ENCODE measurements at regions of chr19 and their contacts with region 1.

Region 1: DNA sequence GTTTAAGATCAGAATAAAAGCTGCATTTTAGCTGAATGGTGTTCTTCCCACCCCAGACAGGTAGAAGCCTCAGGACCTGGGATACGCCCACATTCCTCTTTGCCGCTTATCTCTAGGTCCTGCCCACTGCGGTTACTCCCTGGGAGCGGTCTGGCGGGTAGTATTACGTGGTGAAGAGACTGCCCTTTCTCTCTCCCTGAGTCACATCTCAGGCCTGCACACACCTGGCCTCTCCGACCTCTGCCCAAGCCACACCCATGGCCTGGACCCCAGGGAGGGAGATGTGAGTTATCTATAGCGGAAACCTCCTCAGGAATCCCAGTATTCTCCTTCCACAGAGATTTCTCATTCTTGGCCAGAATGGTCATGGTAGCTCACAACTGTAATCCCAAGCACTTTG is 17.3 kb downstream of the RHPN2 start:
- DNase-seq: peak; percentile 98
- H3K4me3 Mint-ChIP-seq: peak overlapping the region; percentile 47
- H3K27ac Mint-ChIP-seq: peak overlapping the region; percentile 81
- H3K4me1 Mint-ChIP-seq: peaks cover 80% of the 10 kb centered on the region
- H3K27me3 Mint-ChIP-seq: no peaks in the 10 kb centered on the region
- CTCF ChIP-seq: no peak

Region 2: DNA sequence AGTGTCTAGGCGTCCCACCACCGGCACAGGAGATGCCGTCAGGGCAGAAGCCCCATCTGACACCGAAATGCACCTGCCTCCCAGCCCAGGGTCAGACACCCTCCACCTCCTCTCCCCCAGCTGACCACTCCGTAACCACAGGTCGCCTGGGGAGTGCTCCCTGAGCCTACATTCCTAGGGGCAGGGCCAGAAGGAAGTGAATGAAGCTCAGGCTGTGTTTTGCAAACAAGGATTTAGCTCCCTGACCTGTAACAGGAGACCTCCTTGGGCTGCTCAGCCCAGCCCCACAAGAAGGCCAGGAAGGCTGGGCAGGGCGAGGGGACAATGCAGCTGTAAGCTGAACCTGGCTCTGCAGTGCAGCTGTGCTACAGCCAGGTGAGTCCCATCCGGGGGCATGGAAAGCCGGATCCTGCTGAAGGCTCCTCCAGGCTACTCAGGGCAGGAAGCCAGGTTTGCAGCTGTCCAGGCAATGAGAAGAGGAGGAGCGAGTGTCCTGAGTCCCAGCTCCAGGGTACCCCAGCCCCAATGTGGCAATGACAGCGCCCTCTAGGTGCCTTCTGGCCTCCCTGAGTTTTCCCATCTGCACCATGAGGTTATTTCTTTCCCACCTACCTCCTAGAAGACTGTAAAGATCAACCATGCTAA is 24.8 kb before region 1 on chr19:
- CTCF ChIA-PET with region 1: no interaction called
- intact Hi-C with region 1: no loop called
- DNase-seq: no peak
- H3K4me3 Mint-ChIP-seq: no peak overlapping the region
- H3K27ac Mint-ChIP-seq: no peak overlapping the region
- H3K4me1 Mint-ChIP-seq: peaks cover 12% of the 10 kb centered on the region
- H3K27me3 Mint-ChIP-seq: no peaks in the 10 kb centered on the region
- CTCF ChIP-seq: no peak

Region 3: DNA sequence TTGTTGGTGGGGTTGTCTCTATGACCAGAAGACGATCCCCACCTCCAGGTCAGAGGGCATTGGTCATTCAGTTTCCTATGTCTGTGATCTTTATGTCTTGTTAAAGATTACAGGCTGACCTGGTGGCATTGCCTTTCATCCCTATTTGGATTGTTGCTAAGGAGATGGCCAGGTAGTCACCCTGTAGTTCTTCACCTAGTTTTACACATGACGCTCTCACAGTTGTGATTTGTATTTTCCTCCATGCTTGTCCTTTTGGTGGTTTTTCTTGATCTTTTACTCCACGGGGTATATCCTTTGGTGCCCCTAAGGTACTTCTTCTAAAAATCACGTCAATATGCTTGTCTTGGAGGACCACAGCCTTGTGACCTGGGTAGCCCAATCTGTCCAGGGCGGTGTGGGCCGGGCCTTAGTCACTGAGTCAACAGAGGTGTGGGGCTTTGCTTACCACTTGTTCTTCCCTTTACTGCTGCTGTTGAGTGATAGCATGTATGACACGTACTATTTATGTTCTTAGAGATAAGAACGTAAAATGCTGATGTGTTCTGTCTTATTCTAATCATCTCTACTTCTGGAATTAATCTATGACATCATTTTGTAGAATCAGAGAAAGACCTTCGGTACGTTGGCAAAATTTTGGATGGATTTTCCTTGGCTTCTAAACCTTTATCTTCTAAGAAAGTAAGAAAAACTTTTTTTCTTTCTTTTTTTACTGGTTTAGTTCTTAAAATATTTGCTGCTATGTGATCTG is 53.7 kb after region 1 on chr19:
- CTCF ChIA-PET with region 1: interaction called, 3 read pairs
- intact Hi-C with region 1: loop called (anchors 5 kb)
- DNase-seq: peak; percentile 84
- H3K4me3 Mint-ChIP-seq: no peak overlapping the region
- H3K27ac Mint-ChIP-seq: peak overlapping the region; percentile 68
- H3K4me1 Mint-ChIP-seq: peaks cover 41% of the 10 kb centered on the region
- H3K27me3 Mint-ChIP-seq: no peaks in the 10 kb centered on the region
- CTCF ChIP-seq: no peak

Region 4: DNA sequence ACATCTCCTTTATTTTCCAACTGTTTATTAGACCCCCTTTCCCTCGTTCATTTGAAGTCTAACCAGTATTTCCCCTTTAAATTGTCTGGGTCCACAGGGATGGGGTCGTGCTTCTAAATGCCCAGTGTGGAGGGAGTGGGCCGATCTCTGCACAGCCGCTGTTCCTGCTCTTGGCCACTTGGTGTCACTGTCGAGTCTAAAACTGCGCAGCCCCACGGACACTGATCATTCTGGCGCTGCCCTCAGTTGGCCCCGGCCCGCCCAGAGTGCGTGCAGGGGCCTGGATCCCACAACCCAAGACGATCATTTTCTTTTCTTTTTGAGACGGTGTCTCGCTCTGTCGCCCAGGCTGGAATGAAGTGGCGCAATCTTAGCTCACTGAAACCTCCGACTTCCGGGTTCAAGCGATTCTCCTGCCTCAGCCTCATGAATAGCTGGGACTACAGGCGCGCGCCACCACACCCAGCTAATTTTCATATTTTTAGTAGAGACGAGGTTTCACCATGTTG is 96.5 kb after region 1 on chr19:
- CTCF ChIA-PET with region 1: no interaction called
- intact Hi-C with region 1: no loop called
- DNase-seq: peak; percentile 71
- H3K4me3 Mint-ChIP-seq: peak overlapping the region; percentile 4
- H3K27ac Mint-ChIP-seq: no peak overlapping the region
- H3K4me1 Mint-ChIP-seq: peaks cover 7% of the 10 kb centered on the region
- H3K27me3 Mint-ChIP-seq: peaks cover 48% of the 10 kb centered on the region
- CTCF ChIP-seq: peak; percentile 96